ENCODE measurements at regions of chr19 and their contacts with region 1.

Region 1: GRCh38 chr19:13277104-13277809 is 127.0 kb downstream of the IER2 start:
- DNase-seq: peak; percentile 54 to 77
- H3K4me3 ChIP-seq: no peak overlapping the region
- H3K4me3 Mint-ChIP-seq: no peak overlapping the region
- H3K27ac Mint-ChIP-seq: no peak overlapping the region
- H3K4me1 ChIP-seq: no peaks in the 10 kb centered on the region
- H3K4me1 Mint-ChIP-seq: no peaks in the 10 kb centered on the region
- H3K27me3 ChIP-seq: no peaks in the 10 kb centered on the region
- H3K27me3 Mint-ChIP-seq: no peaks in the 10 kb centered on the region
- CTCF ChIP-seq: peak; percentile 42 to 57

Region 2: GRCh38 chr19:13334801-13335481 is 57.7 kb after region 1 on chr19:
- CTCF ChIA-PET with region 1: interaction called, 11 read pairs
- POLR2A ChIA-PET with region 1: no interaction called
- intact Hi-C with region 1: no loop called
- DNase-seq: no peak
- H3K4me3 ChIP-seq: no peak overlapping the region
- H3K4me3 Mint-ChIP-seq: no peak overlapping the region
- H3K27ac Mint-ChIP-seq: no peak overlapping the region
- H3K4me1 ChIP-seq: no peaks in the 10 kb centered on the region
- H3K4me1 Mint-ChIP-seq: no peaks in the 10 kb centered on the region
- H3K27me3 ChIP-seq: no peaks in the 10 kb centered on the region
- H3K27me3 Mint-ChIP-seq: peaks cover 11% of the 10 kb centered on the region
- CTCF ChIP-seq: no peak

Region 3: GRCh38 chr19:13396250-13397080 is 119.2 kb after region 1 on chr19:
- CTCF ChIA-PET with region 1: no interaction called
- POLR2A ChIA-PET with region 1: no interaction called
- intact Hi-C with region 1: no loop called
- DNase-seq: peak; percentile 32 to 48
- H3K4me3 ChIP-seq: no peak overlapping the region
- H3K4me3 Mint-ChIP-seq: no peak overlapping the region
- H3K27ac Mint-ChIP-seq: no peak overlapping the region
- H3K4me1 ChIP-seq: no peaks in the 10 kb centered on the region
- H3K4me1 Mint-ChIP-seq: no peaks in the 10 kb centered on the region
- H3K27me3 ChIP-seq: no peaks in the 10 kb centered on the region
- H3K27me3 Mint-ChIP-seq: peaks cover 12% of the 10 kb centered on the region
- CTCF ChIP-seq: no peak

Region 4: GRCh38 chr19:13430790-13431582 is 153.7 kb after region 1 on chr19:
- CTCF ChIA-PET with region 1: no interaction called
- POLR2A ChIA-PET with region 1: no interaction called
- intact Hi-C with region 1: loop called (anchors 1 kb)
- DNase-seq: peak; percentile 38 to 47
- H3K4me3 ChIP-seq: no peak overlapping the region
- H3K4me3 Mint-ChIP-seq: no peak overlapping the region
- H3K27ac Mint-ChIP-seq: no peak overlapping the region
- H3K4me1 ChIP-seq: no peaks in the 10 kb centered on the region
- H3K4me1 Mint-ChIP-seq: no peaks in the 10 kb centered on the region
- H3K27me3 ChIP-seq: no peaks in the 10 kb centered on the region
- H3K27me3 Mint-ChIP-seq: no peaks in the 10 kb centered on the region
- CTCF ChIP-seq: peak; percentile 52 to 69

Region 5: GRCh38 chr19:13588957-13589833 is 311.9 kb after region 1 on chr19:
- CTCF ChIA-PET with region 1: interaction called, 15 read pairs
- POLR2A ChIA-PET with region 1: interaction called, 3 read pairs
- intact Hi-C with region 1: loop called (anchors 1 kb)
- DNase-seq: peak; percentile 61 to 81
- H3K4me3 ChIP-seq: no peak overlapping the region
- H3K4me3 Mint-ChIP-seq: no peak overlapping the region
- H3K27ac Mint-ChIP-seq: no peak overlapping the region
- H3K4me1 ChIP-seq: no peaks in the 10 kb centered on the region
- H3K4me1 Mint-ChIP-seq: no peaks in the 10 kb centered on the region
- H3K27me3 ChIP-seq: no peaks in the 10 kb centered on the region
- H3K27me3 Mint-ChIP-seq: peaks cover 3% of the 10 kb centered on the region
- CTCF ChIP-seq: peak; percentile 85 to 91